PC-9 (cell line): ENCODE measurements at regions of chr2 and their contacts with region 1.

Region 1: GRCh38 chr2:132670496-132671150 is 618 bp upstream of the LYPD1 start:
- DNase-seq: peak; percentile 40 to 64
- H3K4me3 ChIP-seq: peak overlapping the region; percentile 75
- H3K27ac ChIP-seq: 0 out of 2 replicates have a peak overlapping the region, but pooled peaks have one; percentile 6
- H3K4me1 ChIP-seq: peaks cover 12% of the 10 kb centered on the region
- H3K27me3 ChIP-seq: no peaks in the 10 kb centered on the region
- CTCF ChIP-seq: no peak

Region 2: GRCh38 chr2:132430900-132431294 is 239.7 kb before region 1 on chr2:
- CTCF ChIA-PET with region 1: no interaction called
- POLR2A ChIA-PET with region 1: no interaction called
- intact Hi-C with region 1: loop called (anchors 2 kb)
- DNase-seq: peak; percentile 75 to 96
- H3K4me3 ChIP-seq: peak overlapping the region; percentile 46
- H3K27ac ChIP-seq: peak overlapping the region; percentile 100
- H3K4me1 ChIP-seq: peaks cover 67% of the 10 kb centered on the region
- H3K27me3 ChIP-seq: no peaks in the 10 kb centered on the region
- CTCF ChIP-seq: no peak

Region 3: DNA sequence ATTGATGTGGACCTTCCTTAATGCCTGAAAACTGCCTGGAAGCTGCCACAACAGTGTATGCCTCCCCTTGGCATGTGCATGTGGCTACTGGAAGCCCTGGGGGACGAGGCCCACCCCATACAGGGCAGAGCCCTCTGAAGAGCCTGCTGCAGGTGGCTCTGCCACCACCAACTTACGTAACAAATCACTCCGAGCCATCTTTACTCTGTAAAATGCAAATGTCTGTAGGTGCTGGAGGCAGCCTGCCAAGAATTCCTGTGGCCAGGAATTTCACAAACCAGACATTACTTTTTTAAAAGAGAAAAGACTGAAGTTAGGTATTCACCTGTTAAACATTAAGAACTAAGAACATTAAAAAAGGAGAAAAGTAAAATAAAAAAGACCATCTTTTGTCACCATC is 147.7 kb before region 1 on chr2:
- CTCF ChIA-PET with region 1: no interaction called
- POLR2A ChIA-PET with region 1: no interaction called
- intact Hi-C with region 1: no loop called
- DNase-seq: no peak
- H3K4me3 ChIP-seq: no peak overlapping the region
- H3K27ac ChIP-seq: no peak overlapping the region
- H3K4me1 ChIP-seq: no peaks in the 10 kb centered on the region
- H3K27me3 ChIP-seq: no peaks in the 10 kb centered on the region
- CTCF ChIP-seq: no peak

Region 4: GRCh38 chr2:132632000-132632649 is 38.5 kb before region 1 on chr2:
- CTCF ChIA-PET with region 1: interaction called, 3 read pairs
- POLR2A ChIA-PET with region 1: interaction called, 21 read pairs
- intact Hi-C with region 1: no loop called
- DNase-seq: peak in 1 of 2 experiments; percentile 16
- H3K4me3 ChIP-seq: no peak overlapping the region
- H3K27ac ChIP-seq: no peak overlapping the region
- H3K4me1 ChIP-seq: no peaks in the 10 kb centered on the region
- H3K27me3 ChIP-seq: no peaks in the 10 kb centered on the region
- CTCF ChIP-seq: no peak